ENCODE measurements at regions of chr2 and their contacts with region 1.

Region 1: DNA sequence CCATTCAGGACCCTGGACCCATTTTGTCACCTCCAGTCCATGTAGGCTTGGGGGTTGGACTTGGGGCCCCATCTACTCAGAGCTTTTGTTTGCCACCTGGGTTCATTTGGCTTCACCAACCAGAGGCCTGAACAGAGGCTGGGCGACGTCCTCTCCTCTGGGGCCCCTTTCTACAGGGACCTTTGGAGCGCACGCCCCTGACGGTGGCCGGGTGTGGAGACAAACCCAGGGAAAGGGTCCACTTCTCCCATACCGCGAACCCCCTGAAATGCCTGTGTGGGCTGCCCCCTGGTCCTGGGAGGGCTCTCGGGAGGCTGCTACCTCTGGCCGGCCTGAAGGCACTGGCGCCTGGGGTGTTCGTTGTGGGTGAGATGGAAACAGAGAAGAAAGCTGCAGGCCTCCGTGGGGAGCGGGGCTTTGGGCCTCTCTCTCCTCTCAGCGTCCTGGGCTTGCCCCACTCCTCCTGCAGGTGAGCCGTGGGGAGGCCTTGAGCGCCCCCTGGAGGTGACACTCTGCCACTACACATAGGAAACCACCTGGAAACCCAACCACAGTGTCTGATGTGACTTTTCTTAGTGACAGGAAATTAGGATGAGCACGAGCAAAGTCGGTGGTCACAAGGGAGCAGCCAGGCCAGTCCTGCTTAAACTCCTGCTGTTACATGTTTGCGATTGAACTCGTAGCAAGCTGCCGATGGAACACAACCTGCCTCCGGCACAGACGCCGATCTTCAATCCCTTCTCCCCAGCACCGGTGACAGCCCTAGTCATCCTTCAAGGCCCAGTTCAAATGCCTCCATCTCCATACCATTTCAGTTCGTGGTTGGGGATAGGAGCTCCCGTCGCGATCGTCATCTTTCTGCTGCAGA is 12.0 kb upstream of the NTSR2 start:
- DNase-seq: peak; percentile 42 to 56 (median 46)
- H3K4me3 ChIP-seq: no peak overlapping the region
- H3K4me3 Mint-ChIP-seq: peak overlapping the region in 1 of 8 donors; percentile 32
- H3K27ac ChIP-seq: no peak overlapping the region
- H3K27ac Mint-ChIP-seq: peak overlapping the region in 1 of 7 donors; percentile 10
- H3K4me1 ChIP-seq: peaks cover 3% of the 10 kb centered on the region
- H3K4me1 Mint-ChIP-seq: peaks cover 0 to 7% (median 5%) of the 10 kb centered on the region in 4 donors
- H3K27me3 ChIP-seq: no peaks in the 10 kb centered on the region
- H3K27me3 Mint-ChIP-seq: peaks cover 16 to 19% of the 10 kb centered on the region in 2 donors

Region 2: GRCh38 chr2:11669454-11670291 is 12.3 kb before region 1 on chr2 and contains the start of gene NTSR2:
- CTCF ChIA-PET with region 1: interaction called, 12 read pairs
- POLR2A ChIA-PET with region 1: no interaction called
- intact Hi-C with region 1: no loop called
- DNase-seq: peak in 3 of 5 donors; percentile 21 to 24 (median 24)
- H3K4me3 ChIP-seq: no peak within 1 kb of the TSS
- H3K4me3 Mint-ChIP-seq: peak within 1 kb of the TSS in 1 of 8 donors; percentile 5
- H3K27ac ChIP-seq: no peak within 1 kb of the TSS
- H3K27ac Mint-ChIP-seq: no peak within 1 kb of the TSS
- H3K4me1 ChIP-seq: no peaks in the 10 kb centered on the region
- H3K4me1 Mint-ChIP-seq: peaks cover 6 to 13% (median 8%) of the 10 kb centered on the region in 4 donors
- H3K27me3 ChIP-seq: no peaks in the 10 kb centered on the region
- H3K27me3 Mint-ChIP-seq: peaks cover 19 to 32% of the 10 kb centered on the region in 2 donors
- total RNA-seq, gene NTSR2: not detected

Measured in CD4-positive, alpha-beta memory T cell (primary cell).